Heart right ventricle (tissue), 16 donors: ENCODE measurements at regions of chr5 and their contacts with region 1.

Region 1: DNA sequence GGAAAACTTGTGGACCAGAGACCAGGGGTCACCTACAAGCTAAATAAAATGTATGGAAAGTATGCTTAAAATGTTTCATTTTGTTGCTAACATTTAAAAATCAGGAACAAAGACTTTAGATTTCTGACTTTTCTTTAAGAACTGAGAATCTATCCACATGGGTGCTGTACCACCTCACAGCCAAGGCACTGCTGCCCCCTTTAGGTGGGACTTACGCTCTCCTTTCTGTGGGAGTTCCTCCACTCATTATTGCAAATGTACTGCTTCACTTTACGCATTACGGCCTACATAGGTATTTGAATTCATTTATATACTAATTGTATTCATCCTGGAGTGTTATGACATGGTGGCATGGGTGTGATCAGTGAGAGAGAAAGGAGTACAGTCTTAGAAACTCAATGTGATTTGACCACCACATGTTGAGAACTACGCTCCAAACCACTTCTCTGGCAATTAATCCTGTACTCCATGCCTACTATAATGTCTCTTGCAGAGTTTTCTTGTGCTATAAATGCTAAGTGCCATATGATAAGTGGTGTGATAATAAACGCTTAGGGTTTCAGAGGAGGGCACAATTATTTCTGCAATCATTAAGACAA is 24.7 kb upstream of the CETN3 start:
- DNase-seq: no peak
- ATAC-seq: peak in 2 of 8 donors; percentile 45 to 48
- H3K4me3 ChIP-seq: no peak overlapping the region
- H3K27ac ChIP-seq: no peak overlapping the region
- H3K4me1 ChIP-seq: peaks cover 0 to 9% (median 4%) of the 10 kb centered on the region in 9 donors
- H3K27me3 ChIP-seq: no peaks in the 10 kb centered on the region
- CTCF ChIP-seq: peak; percentile 23 to 68 (median 59)

Region 2: DNA sequence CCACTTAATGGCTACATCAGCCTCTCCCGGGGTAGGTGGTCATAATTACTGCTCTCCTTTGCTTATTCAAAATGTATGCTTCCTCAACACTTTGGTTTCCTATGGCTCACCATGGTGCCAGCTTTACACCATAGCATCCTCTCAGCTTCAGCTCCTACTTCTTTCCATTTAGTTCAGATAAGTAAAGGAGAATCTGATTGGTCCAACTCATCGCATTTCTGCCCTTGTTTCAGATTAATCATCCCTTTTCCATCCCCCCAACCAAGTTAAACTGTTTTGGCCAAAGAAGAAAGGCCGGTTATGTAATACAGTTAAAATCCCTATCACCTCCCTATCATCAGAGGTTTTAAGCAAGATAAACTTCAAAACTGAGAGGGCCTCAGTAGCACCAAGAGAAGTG is 155.1 kb before region 1 on chr5:
- intact Hi-C with region 1: no loop called
- DNase-seq: no peak
- ATAC-seq: no peak
- H3K4me3 ChIP-seq: no peak overlapping the region
- H3K27ac ChIP-seq: no peak overlapping the region
- H3K4me1 ChIP-seq: no peaks in the 10 kb centered on the region
- H3K27me3 ChIP-seq: peaks cover 0 to 5% (median 0%) of the 10 kb centered on the region in 7 donors
- CTCF ChIP-seq: no peak

Region 3: DNA sequence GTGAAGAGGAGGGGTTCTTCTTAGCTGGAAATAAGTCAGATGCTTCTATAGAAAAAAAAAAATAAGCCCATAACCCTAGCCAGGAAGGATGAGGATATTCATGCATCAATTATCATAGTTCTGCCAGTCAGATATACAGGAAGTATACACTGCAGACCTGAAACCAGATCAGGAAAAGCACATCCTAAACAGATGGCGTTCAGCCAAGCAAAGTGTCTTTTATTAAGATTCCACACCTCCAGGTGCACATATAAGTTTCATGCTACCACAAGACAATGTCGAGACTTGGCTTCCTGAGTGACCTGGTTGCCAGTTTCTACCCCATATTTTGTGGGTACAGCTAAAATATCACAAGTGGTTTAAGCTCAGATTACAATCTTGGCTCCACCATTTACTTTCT is 133.0 kb before region 1 on chr5:
- intact Hi-C with region 1: no loop called
- DNase-seq: no peak
- ATAC-seq: no peak
- H3K4me3 ChIP-seq: no peak overlapping the region
- H3K27ac ChIP-seq: no peak overlapping the region
- H3K4me1 ChIP-seq: no peaks in the 10 kb centered on the region
- H3K27me3 ChIP-seq: no peaks in the 10 kb centered on the region
- CTCF ChIP-seq: no peak

Region 4: DNA sequence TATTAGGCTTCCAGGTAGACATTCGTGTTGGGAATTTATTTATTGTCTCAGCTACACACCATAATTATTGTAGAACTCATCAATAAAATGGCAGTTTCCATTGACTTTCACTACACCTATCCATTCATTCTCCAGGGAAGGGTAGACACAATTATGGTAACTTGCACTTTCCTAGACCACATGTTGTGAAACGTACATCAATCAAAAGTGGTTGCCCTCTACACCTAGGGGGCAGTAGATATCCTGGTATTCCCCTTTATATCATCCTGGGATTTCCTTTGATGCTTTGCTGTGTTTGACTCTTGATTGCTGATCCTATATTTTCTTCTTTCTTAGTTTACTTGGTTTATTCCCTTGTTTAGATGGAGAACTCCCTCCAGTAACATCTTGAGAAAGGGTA is 172.3 kb after region 1 on chr5:
- intact Hi-C with region 1: loop called in 5 of 10 experiments (anchors 2 to 10 kb)
- DNase-seq: no peak
- ATAC-seq: no peak
- H3K4me3 ChIP-seq: no peak overlapping the region
- H3K27ac ChIP-seq: no peak overlapping the region
- H3K4me1 ChIP-seq: no peaks in the 10 kb centered on the region
- H3K27me3 ChIP-seq: peaks cover 0 to 38% (median 4%) of the 10 kb centered on the region in 7 donors
- CTCF ChIP-seq: peak in 2 of 9 donors; percentile 16 to 21

Region 5: GRCh38 chr5:90777959-90778358 is 343.7 kb after region 1 on chr5:
- intact Hi-C with region 1: loop called in 7 of 10 experiments (anchors 1 to 10 kb)
- DNase-seq: no peak
- ATAC-seq: no peak
- H3K4me3 ChIP-seq: no peak overlapping the region
- H3K27ac ChIP-seq: no peak overlapping the region
- H3K4me1 ChIP-seq: no peaks in the 10 kb centered on the region
- H3K27me3 ChIP-seq: peaks cover 0 to 3% (median 0%) of the 10 kb centered on the region in 7 donors
- CTCF ChIP-seq: no peak